ENCODE measurements at regions of chr2 and their contacts with region 1.

Region 1: DNA sequence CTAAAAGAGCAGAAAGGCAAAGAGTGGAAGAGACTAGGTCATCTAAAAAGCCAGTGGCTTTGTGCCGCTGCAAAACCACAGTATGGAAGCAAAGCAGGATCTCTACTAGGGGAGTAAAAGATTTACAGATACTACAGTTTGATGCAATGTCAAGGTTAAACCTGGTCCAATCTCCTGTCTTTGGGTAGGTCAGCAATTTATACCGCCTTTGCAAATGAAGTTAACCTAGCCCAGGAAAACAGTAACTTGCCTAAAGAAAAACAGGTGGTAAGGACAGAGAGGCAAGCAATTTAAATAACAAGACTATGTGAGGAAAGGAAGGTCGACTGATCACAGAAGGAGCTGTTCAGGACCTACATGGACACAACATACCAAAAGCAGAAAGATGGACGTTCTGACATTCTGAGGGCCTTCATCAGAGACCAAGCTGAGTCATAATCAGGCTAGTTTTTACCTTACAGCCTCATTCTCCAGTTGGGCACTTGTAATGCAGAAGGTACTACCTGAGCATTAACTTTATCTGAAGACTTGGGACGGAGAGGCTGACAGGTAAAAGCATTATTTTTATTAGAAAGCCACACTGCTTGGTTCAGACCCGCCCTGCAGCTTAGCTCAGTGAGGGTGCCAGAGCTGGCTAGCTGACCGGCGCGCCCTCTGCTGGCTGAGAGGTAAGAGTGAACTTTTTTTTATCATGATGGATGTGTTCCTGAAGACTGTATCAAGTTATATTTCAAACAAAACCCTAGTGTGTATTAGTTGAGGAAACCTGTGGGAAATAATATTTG is 15.9 kb downstream of the CDKL4 start:
- DNase-seq: peak; percentile 91
- ATAC-seq: peak; percentile 82
- H3K4me3 Mint-ChIP-seq: peak overlapping the region; percentile 56
- H3K27ac Mint-ChIP-seq: peak overlapping the region; percentile 89
- H3K4me1 Mint-ChIP-seq: peaks cover 41% of the 10 kb centered on the region
- H3K27me3 Mint-ChIP-seq: no peaks in the 10 kb centered on the region
- CTCF ChIP-seq: peak; percentile 92

Region 2: GRCh38 chr2:38856165-38856564 is 371.7 kb before region 1 on chr2:
- CTCF ChIA-PET with region 1: no interaction called
- POLR2A ChIA-PET with region 1: no interaction called
- intact Hi-C with region 1: no loop called
- DNase-seq: no peak
- ATAC-seq: no peak
- H3K4me3 Mint-ChIP-seq: no peak overlapping the region
- H3K27ac Mint-ChIP-seq: no peak overlapping the region
- H3K4me1 Mint-ChIP-seq: no peaks in the 10 kb centered on the region
- H3K27me3 Mint-ChIP-seq: no peaks in the 10 kb centered on the region
- CTCF ChIP-seq: no peak

Region 3: GRCh38 chr2:39008665-39009064 is 219.2 kb before region 1 on chr2:
- CTCF ChIA-PET with region 1: interaction called, 13 read pairs
- POLR2A ChIA-PET with region 1: no interaction called
- intact Hi-C with region 1: no loop called
- DNase-seq: peak; percentile 40
- ATAC-seq: peak; percentile 56
- H3K4me3 Mint-ChIP-seq: no peak overlapping the region
- H3K27ac Mint-ChIP-seq: peak overlapping the region; percentile 72
- H3K4me1 Mint-ChIP-seq: peaks cover 19% of the 10 kb centered on the region
- H3K27me3 Mint-ChIP-seq: no peaks in the 10 kb centered on the region
- CTCF ChIP-seq: no peak

Region 4: DNA sequence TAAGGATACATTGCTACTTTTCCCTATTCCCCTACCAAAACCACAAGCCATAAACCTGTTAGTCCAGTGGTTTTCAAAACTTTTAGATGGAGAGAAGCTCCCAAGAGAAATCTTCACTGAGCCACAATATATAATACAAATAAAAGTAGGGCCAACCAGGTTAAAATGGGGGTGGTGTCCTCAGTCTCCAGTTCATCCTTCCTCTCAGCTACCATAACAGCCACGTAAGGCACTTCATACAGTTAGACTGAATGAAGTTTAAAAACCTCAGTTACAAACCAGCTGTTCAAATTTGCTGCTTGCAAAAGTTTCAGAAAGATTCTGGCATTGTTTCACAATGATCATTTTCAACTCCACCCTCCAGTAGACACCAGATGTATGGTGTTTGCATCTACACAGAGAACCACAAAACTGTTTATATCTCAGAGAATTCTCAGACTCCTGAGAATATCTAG is 132.9 kb before region 1 on chr2:
- CTCF ChIA-PET with region 1: interaction called, 11 read pairs
- POLR2A ChIA-PET with region 1: no interaction called
- intact Hi-C with region 1: no loop called
- DNase-seq: no peak
- ATAC-seq: peak; percentile 27
- H3K4me3 Mint-ChIP-seq: no peak overlapping the region
- H3K27ac Mint-ChIP-seq: peak overlapping the region; percentile 37
- H3K4me1 Mint-ChIP-seq: peaks cover 55% of the 10 kb centered on the region
- H3K27me3 Mint-ChIP-seq: no peaks in the 10 kb centered on the region
- CTCF ChIP-seq: no peak

Region 5: GRCh38 chr2:39141331-39142271 is 86.2 kb before region 1 on chr2:
- CTCF ChIA-PET with region 1: interaction called, 23 read pairs
- POLR2A ChIA-PET with region 1: no interaction called
- intact Hi-C with region 1: no loop called
- DNase-seq: peak; percentile 21
- ATAC-seq: peak; percentile 30
- H3K4me3 Mint-ChIP-seq: no peak overlapping the region
- H3K27ac Mint-ChIP-seq: peak overlapping the region; percentile 12
- H3K4me1 Mint-ChIP-seq: peaks cover 28% of the 10 kb centered on the region
- H3K27me3 Mint-ChIP-seq: no peaks in the 10 kb centered on the region
- CTCF ChIP-seq: no peak

Region 6: GRCh38 chr2:39202639-39203369 is 25.0 kb before region 1 on chr2:
- CTCF ChIA-PET with region 1: interaction called, 26 read pairs
- POLR2A ChIA-PET with region 1: no interaction called
- intact Hi-C with region 1: no loop called
- DNase-seq: peak; percentile 32
- ATAC-seq: peak; percentile 86
- H3K4me3 Mint-ChIP-seq: no peak overlapping the region
- H3K27ac Mint-ChIP-seq: peak overlapping the region; percentile 63
- H3K4me1 Mint-ChIP-seq: peaks cover 22% of the 10 kb centered on the region
- H3K27me3 Mint-ChIP-seq: no peaks in the 10 kb centered on the region
- CTCF ChIP-seq: no peak

Region 7: GRCh38 chr2:39243476-39244123 is 15.8 kb after region 1 on chr2 and contains the start of gene CDKL4:
- CTCF ChIA-PET with region 1: interaction called, 40 read pairs
- POLR2A ChIA-PET with region 1: interaction called, 3 read pairs
- intact Hi-C with region 1: no loop called
- DNase-seq: peak; percentile 26
- ATAC-seq: peak; percentile 40
- H3K4me3 Mint-ChIP-seq: peak within 1 kb of the TSS; percentile 72
- H3K27ac Mint-ChIP-seq: peak within 1 kb of the TSS; percentile 31
- H3K4me1 Mint-ChIP-seq: peaks cover 18% of the 10 kb centered on the region
- H3K27me3 Mint-ChIP-seq: no peaks in the 10 kb centered on the region
- CTCF ChIP-seq: no peak
- total RNA-seq, gene CDKL4: 0.29 TPM in 1 of 2 experiments, not detected in the other

Measured in activated CD8-positive, alpha-beta T cell treated with anti-CD3 and anti-CD28 coated beads for 36 hours (primary cell).